Gastrocnemius medialis (tissue), 4 donors: ENCODE measurements at regions of chr10 and their contacts with region 1.

Region 1: DNA sequence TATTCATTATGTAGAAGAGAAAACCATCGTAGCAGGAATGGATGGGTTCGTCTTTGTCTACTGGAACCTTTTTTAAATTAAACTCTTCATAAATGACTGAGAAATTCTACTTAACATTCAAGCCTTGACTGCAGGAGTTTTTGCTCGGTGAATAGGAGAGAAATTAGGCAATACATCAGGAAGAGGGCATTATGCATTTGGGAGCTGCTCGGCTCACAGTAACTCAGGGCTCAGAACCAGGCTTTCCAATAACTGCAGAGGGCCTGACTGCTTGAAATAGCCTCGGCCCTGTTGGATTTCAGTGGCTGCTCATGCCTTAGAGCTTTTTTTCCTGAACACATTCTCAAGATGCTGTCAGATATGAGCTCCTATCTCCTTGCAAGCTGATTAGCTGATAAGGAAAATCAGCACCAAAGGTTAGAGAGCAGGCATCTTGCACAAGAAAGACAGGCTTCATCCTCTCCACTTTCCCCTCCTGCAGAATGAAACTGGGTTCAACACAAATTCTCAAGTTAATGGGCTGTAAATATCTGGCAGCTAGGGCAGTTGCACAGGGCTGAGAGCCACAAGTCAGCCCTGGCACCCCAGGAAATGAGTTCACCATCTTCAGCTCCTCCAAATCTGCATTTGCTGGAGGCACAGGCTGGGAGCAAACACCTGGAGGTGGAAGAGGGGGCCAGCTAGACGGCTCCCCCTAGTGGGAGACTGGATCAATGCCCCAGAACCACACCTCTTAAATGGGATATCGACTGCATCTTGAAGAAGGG is 24.3 kb downstream of the TECTB start:
- DNase-seq: peak in 1 of 2 donors; percentile 21
- ATAC-seq: peak; percentile 70 to 73
- H3K4me3 ChIP-seq: no peak overlapping the region
- H3K27ac ChIP-seq: no peak overlapping the region
- H3K4me1 ChIP-seq: no peaks in the 10 kb centered on the region
- H3K27me3 ChIP-seq: no peaks in the 10 kb centered on the region
- CTCF ChIP-seq: peak; percentile 46 to 83 (median 58)
- POLR2A ChIP-seq: no peak

Region 2: DNA sequence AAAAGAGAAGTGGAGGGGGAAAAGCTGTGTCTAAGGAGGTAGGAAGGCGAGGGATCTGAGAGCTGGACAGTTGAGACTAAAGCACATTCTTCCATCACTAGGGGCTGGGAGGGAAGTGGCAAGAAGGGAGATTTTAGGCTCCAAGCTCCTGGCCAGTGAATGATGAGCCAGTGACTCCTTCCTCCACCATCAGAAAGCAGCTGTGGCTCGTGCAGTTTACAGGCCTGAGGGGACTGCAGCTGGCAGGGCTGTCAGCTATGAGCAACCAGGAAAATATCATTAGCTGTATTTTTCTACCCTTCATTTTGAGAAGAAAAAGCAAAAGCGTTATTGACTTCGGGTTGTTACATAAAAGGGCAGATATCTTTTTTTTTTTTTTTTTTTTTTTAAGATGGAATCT is 184.7 kb before region 1 on chr10:
- in situ Hi-C with region 1: no loop called
- intact Hi-C with region 1: no loop called
- DNase-seq: no peak
- ATAC-seq: no peak
- H3K4me3 ChIP-seq: no peak overlapping the region
- H3K27ac ChIP-seq: no peak overlapping the region
- H3K4me1 ChIP-seq: no peaks in the 10 kb centered on the region
- H3K27me3 ChIP-seq: no peaks in the 10 kb centered on the region
- CTCF ChIP-seq: no peak
- POLR2A ChIP-seq: no peak

Region 3: GRCh38 chr10:112235920-112236319 is 71.6 kb before region 1 on chr10:
- in situ Hi-C with region 1: no loop called
- intact Hi-C with region 1: loop called (anchors 5 kb)
- DNase-seq: no peak
- ATAC-seq: no peak
- H3K4me3 ChIP-seq: no peak overlapping the region
- H3K27ac ChIP-seq: no peak overlapping the region
- H3K4me1 ChIP-seq: peaks cover 6 to 14% of the 10 kb centered on the region in 2 donors
- H3K27me3 ChIP-seq: no peaks in the 10 kb centered on the region
- CTCF ChIP-seq: no peak
- POLR2A ChIP-seq: no peak

Region 4: GRCh38 chr10:112507046-112507445 is 199.5 kb after region 1 on chr10:
- in situ Hi-C with region 1: no loop called
- intact Hi-C with region 1: no loop called
- DNase-seq: no peak
- ATAC-seq: no peak
- H3K4me3 ChIP-seq: no peak overlapping the region
- H3K27ac ChIP-seq: no peak overlapping the region
- H3K4me1 ChIP-seq: no peaks in the 10 kb centered on the region
- H3K27me3 ChIP-seq: no peaks in the 10 kb centered on the region
- CTCF ChIP-seq: no peak
- POLR2A ChIP-seq: no peak